Aorta (tissue), 5 donors: ENCODE measurements at regions of chr4 and their contacts with region 1.

Region 1: GRCh38 chr4:41934815-41935651 is at the start of gene TMEM33:
- DNase-seq: peak; percentile 90 to 94
- ATAC-seq: peak; percentile 93
- H3K4me3 ChIP-seq: peak within 1 kb of the TSS; percentile 39 to 67
- H3K27ac ChIP-seq: peak within 1 kb of the TSS in 1 of 2 donors; percentile 53
- H3K4me1 ChIP-seq: peaks cover 0 to 3% of the 10 kb centered on the region in 2 donors
- H3K27me3 ChIP-seq: no peaks in the 10 kb centered on the region
- total RNA-seq, gene TMEM33: 28.0 to 33.9 TPM

Region 2: DNA sequence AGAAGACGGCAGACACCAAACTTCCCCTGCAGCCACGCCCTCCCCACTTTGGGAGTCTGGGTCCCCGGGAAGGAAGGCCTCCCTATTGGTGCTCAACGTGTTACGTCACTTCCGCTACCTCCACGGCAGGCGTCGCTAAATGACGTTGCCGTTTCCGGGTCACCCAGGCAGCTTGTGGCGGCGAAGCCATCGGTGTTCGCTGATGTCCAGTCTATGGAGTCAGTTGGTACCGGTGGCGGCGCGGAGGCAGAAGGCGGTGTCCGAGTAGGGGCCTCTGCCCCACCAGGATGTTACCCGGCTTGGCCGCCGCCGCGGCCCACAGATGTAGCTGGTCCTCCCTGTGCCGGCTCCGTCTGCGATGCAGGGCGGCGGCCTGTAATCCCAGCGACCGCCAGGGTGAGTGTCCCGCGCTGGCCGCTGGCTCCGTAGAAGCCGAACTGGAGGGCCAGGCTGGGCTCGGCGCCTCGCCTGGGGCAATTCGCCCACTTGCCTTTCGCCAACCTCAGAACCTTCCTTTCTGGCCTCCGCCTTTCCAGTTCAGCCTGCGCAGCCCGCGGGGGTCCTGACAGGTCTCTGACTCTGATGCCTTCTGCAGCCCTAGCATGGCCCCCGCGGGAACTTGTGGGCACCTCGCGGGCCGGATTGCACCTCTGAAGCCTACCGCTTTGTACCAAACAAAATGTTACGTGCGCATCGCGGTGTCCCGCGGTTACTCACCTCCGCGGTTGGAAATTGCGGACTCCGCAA is 55.5 kb after region 1 on chr4 and contains the start of gene SLC30A9:
- intact Hi-C with region 1: loop called in 1 of 2 experiments (anchors 2 kb)
- DNase-seq: peak; percentile 96 to 97
- ATAC-seq: peak; percentile 99
- H3K4me3 ChIP-seq: peak within 1 kb of the TSS; percentile 60 to 81
- H3K27ac ChIP-seq: peak within 1 kb of the TSS in 1 of 2 donors; percentile 14
- H3K4me1 ChIP-seq: peaks cover 3 to 4% of the 10 kb centered on the region in 2 donors
- H3K27me3 ChIP-seq: no peaks in the 10 kb centered on the region
- total RNA-seq, gene SLC30A9: 36.4 to 40.0 TPM